Heart left ventricle (tissue), 16 donors: ENCODE measurements at regions of chr1 and their contacts with region 1.

Region 1: DNA sequence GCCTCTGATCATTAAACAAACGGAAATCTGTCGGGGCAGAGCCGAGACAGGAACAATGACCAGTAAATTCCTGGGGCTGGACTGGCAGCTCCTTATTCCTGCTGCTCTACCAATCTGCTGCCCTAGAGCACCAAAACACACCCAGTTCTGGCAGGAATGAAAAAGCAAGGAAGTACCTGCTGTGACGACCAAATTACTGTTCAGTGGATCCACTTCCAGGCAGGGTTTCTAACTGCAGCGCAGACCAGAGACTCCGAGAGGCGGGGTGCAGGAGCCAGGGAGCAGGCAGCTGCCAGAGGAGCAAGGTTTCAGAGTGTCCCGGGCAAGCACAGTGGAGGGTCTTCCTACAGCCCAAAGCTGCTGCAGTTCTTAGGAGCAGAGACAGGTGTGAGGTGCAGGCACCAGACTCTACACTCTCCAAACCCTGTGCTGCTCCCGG is 32.4 kb downstream of the KANK4 start:
- DNase-seq: no peak
- ATAC-seq: no peak
- H3K4me3 ChIP-seq: peak overlapping the region in 5 of 12 donors; percentile 0 to 32 (median 17)
- H3K27ac ChIP-seq: no peak overlapping the region
- H3K4me1 ChIP-seq: peaks cover 0 to 17% (median 0%) of the 10 kb centered on the region in 12 donors
- H3K27me3 ChIP-seq: peaks cover 0 to 39% (median 0%) of the 10 kb centered on the region in 9 donors
- CTCF ChIP-seq: no peak
- POLR2A ChIP-seq: no peak

Region 2: DNA sequence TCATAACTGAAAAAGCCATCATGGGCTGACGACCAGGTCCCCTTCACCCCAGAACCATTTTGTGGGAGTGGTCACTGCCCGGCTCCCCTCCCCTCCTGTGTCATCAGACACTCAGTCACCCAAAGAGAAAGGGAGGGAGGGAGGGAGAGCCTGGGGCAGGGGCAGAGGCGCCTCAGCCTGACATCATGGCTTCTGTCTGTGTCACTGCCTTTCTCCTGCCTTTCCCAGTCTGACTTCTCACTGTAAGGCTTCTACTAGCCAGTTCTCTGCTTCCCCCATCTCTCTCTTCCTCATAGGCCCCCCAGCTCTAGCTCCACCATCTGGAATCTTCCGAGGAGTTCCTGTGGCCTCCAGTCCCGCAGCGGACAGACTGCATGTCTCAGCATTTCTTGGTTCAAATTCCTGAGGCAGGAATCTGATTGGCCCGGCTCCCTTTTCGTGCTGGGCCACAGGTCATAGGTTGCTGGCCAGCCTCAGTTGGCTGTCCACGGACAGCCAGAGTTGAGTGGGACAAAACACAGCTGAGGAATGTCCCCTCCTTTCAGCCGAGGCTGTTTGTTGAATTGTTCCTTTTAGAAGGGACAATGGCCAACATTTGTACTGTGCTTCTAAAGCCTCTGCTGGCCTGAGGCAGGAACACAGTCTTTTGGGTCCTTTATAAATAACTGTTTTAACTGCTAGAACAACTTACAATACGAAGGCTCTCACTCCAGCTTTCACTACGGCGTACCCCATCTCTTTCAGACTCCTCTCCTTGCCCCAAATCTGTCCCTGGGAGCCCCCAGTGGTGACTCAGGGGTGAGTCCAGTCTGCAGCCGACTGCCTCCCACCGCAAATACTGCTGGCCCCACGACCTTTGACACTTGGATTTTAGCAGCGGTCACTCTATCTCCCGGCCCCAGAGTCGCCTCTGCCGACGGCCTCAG is 51.2 kb after region 1 on chr1:
- intact Hi-C with region 1: loop called in 1 of 10 experiments (anchors 10 kb)
- DNase-seq: peak in 1 of 5 donors; percentile 33
- ATAC-seq: peak in 2 of 4 donors; percentile 32 to 46
- H3K4me3 ChIP-seq: peak overlapping the region in 1 of 12 donors; percentile 12
- H3K27ac ChIP-seq: peak overlapping the region; percentile 21 to 75 (median 62)
- H3K4me1 ChIP-seq: peaks cover 4 to 28% (median 20%) of the 10 kb centered on the region in 12 donors
- H3K27me3 ChIP-seq: no peaks in the 10 kb centered on the region
- CTCF ChIP-seq: peak in 5 of 12 donors; percentile 10 to 31 (median 25)
- POLR2A ChIP-seq: no peak

Region 3: DNA sequence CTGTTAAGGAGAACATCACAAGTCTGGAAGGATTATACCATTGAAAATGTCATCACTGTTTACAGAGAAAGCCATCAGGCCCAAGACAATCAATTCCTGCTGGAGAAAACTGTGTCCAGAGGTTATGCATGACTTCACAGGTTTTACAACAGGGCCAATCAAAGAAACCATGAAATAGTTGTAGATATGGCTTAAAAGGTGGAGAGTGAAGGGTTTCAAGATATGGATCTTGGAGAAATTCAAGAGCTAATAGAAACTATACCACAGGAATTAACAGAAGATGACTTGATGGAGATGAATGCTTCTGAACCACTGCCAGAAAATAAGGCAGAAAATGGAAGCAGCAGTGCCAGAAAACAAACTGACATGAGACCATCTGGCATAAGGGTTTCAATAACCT is 180.3 kb after region 1 on chr1:
- intact Hi-C with region 1: no loop called
- DNase-seq: no peak
- ATAC-seq: no peak
- H3K4me3 ChIP-seq: no peak overlapping the region
- H3K27ac ChIP-seq: no peak overlapping the region
- H3K4me1 ChIP-seq: no peaks in the 10 kb centered on the region
- H3K27me3 ChIP-seq: no peaks in the 10 kb centered on the region
- CTCF ChIP-seq: no peak
- POLR2A ChIP-seq: no peak